B cell (primary cell): ENCODE measurements at regions of chr5 and their contacts with region 1.

Region 1: GRCh38 chr5:139293504-139294373 is at the start of gene MATR3:
- DNase-seq: peak; percentile 96
- ATAC-seq: peak; percentile 87
- H3K4me3 ChIP-seq: peak within 1 kb of the TSS; percentile 81 to 97 (median 87)
- H3K4me3 Mint-ChIP-seq: peak within 1 kb of the TSS; percentile 98
- H3K27ac ChIP-seq: peak within 1 kb of the TSS; percentile 94 to 99
- H3K27ac Mint-ChIP-seq: peak within 1 kb of the TSS; percentile 99
- H3K4me1 ChIP-seq: peaks cover 35 to 39% of the 10 kb centered on the region in 2 donors
- H3K4me1 Mint-ChIP-seq: peaks cover 44% of the 10 kb centered on the region
- H3K27me3 ChIP-seq: no peaks in the 10 kb centered on the region
- H3K27me3 Mint-ChIP-seq: no peaks in the 10 kb centered on the region
- CTCF ChIP-seq: no peak
- total RNA-seq, gene MATR3: 243 and 271 TPM in 2 replicates

Region 2: DNA sequence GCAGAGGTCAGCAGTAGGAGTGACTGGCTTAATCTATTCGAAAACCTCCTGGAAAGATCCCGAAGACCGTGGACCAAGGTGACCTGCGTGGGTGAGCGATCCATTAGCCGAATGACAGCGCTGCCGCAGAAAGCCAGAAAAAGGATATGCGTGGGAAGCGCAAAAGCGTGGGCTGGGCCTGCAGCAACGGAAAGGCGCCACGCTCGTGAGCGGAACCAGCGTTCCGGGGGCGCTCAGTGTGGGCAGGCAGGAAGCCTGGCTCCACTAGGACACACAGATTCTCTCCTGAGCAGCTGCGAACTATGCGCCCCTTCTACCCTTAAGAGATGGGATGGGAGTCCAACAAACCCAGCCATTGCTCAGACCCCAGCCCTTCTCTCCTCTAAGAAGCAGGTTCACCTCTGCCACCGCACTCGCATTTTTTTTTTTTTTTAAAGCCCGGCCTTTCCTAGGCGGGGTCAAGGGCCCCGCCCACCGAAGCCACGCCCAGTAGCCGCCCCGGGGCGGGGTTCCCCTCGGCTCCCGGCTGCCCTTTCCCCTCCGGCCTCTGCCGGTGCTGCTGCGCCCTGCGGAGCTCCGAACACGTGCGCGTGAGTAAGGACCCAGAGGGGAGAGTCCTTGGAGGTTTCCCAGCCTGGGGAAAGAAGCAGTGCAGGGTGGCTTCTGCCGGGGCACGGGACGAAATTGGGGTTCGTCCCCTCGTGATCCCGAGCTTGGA is 20.0 kb before region 1 on chr5:
- CTCF ChIA-PET with region 1: interaction called, 8 read pairs
- POLR2A ChIA-PET with region 1: interaction called, 34 read pairs
- intact Hi-C with region 1: loop called (anchors 1 kb)
- DNase-seq: peak; percentile 95
- ATAC-seq: peak; percentile 98
- H3K4me3 ChIP-seq: peak overlapping the region; percentile 61 to 86 (median 75)
- H3K4me3 Mint-ChIP-seq: peak overlapping the region; percentile 92
- H3K27ac ChIP-seq: peak overlapping the region; percentile 62 to 74
- H3K27ac Mint-ChIP-seq: peak overlapping the region; percentile 91
- H3K4me1 ChIP-seq: peaks cover 32 to 44% of the 10 kb centered on the region in 2 donors
- H3K4me1 Mint-ChIP-seq: peaks cover 46% of the 10 kb centered on the region
- H3K27me3 ChIP-seq: no peaks in the 10 kb centered on the region
- H3K27me3 Mint-ChIP-seq: no peaks in the 10 kb centered on the region
- CTCF ChIP-seq: no peak

Region 3: GRCh38 chr5:139312075-139312474 is 18.3 kb after region 1 on chr5:
- CTCF ChIA-PET with region 1: interaction called, 3 read pairs
- POLR2A ChIA-PET with region 1: interaction called, 4 read pairs
- intact Hi-C with region 1: loop called (anchors 2 kb)
- DNase-seq: no peak
- ATAC-seq: no peak
- H3K4me3 ChIP-seq: no peak overlapping the region
- H3K4me3 Mint-ChIP-seq: no peak overlapping the region
- H3K27ac ChIP-seq: no peak overlapping the region
- H3K27ac Mint-ChIP-seq: no peak overlapping the region
- H3K4me1 ChIP-seq: peaks cover 14 to 41% of the 10 kb centered on the region in 2 donors
- H3K4me1 Mint-ChIP-seq: peaks cover 53% of the 10 kb centered on the region
- H3K27me3 ChIP-seq: no peaks in the 10 kb centered on the region
- H3K27me3 Mint-ChIP-seq: no peaks in the 10 kb centered on the region
- CTCF ChIP-seq: no peak

Region 4: GRCh38 chr5:139392678-139393496 is 99.1 kb after region 1 on chr5:
- CTCF ChIA-PET with region 1: interaction called, 6 read pairs
- POLR2A ChIA-PET with region 1: interaction called, 20 read pairs
- intact Hi-C with region 1: loop called (anchors 1 kb)
- DNase-seq: peak; percentile 93
- ATAC-seq: peak; percentile 56
- H3K4me3 ChIP-seq: peak overlapping the region; percentile 69 to 90 (median 80)
- H3K4me3 Mint-ChIP-seq: peak overlapping the region; percentile 99
- H3K27ac ChIP-seq: peak overlapping the region; percentile 60 to 65
- H3K27ac Mint-ChIP-seq: peak overlapping the region; percentile 93
- H3K4me1 ChIP-seq: peaks cover 44 to 60% of the 10 kb centered on the region in 2 donors
- H3K4me1 Mint-ChIP-seq: peaks cover 46% of the 10 kb centered on the region
- H3K27me3 ChIP-seq: no peaks in the 10 kb centered on the region
- H3K27me3 Mint-ChIP-seq: no peaks in the 10 kb centered on the region
- CTCF ChIP-seq: peak; percentile 94

Region 5: GRCh38 chr5:139439013-139439903 is 145.5 kb after region 1 on chr5 and contains the start of gene DNAJC18:
- CTCF ChIA-PET with region 1: no interaction called
- POLR2A ChIA-PET with region 1: interaction called, 3 read pairs
- intact Hi-C with region 1: loop called (anchors 1 kb)
- DNase-seq: peak; percentile 93
- ATAC-seq: peak; percentile 94
- H3K4me3 ChIP-seq: peak within 1 kb of the TSS; percentile 53 to 97 (median 91)
- H3K4me3 Mint-ChIP-seq: peak within 1 kb of the TSS; percentile 97
- H3K27ac ChIP-seq: peak within 1 kb of the TSS; percentile 98 to 100
- H3K27ac Mint-ChIP-seq: peak within 1 kb of the TSS; percentile 99
- H3K4me1 ChIP-seq: peaks cover 11 to 12% of the 10 kb centered on the region in 2 donors
- H3K4me1 Mint-ChIP-seq: peaks cover 16% of the 10 kb centered on the region
- H3K27me3 ChIP-seq: no peaks in the 10 kb centered on the region
- H3K27me3 Mint-ChIP-seq: peaks cover 3% of the 10 kb centered on the region
- CTCF ChIP-seq: no peak
- total RNA-seq, gene DNAJC18: 13.6 and 16.5 TPM in 2 replicates

Region 6: DNA sequence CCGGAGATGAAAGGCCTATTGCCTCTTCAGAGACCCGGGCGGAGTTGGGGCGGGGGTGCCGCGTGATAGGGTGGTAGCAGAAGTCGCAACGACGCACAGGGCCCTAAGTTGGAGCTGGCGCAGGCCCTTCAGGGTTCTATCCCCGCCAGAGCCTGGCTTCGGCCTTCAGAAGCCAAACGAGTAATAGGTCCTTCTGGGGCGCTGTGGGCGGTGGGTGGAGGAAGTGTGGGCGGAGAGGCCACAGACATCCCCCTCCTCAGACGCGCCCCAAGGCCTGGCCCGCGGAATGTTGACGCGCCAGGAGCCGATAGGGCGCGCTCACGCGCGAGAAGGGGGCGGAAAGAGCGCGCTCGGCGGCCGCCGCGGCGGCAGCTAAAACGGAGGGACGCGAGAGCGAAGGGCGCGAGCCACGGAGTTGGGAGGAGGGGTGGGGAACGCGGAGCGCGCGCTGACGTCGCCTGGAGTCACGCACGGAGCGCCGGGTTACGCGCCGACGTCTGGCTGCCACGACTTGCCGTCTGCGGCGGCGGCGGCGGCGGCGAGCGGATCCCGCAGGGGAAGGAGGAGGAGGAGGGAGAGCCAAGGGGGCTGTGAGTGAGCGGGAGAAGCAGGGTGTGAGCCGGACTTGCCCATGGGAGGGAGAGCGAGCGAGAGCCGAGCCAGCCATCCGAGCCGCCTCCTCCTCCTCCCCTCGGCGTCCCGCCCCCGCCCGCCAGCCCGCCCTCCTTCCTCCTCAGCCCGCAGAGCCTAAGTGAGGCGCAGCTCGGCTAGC is 813.8 kb after region 1 on chr5:
- CTCF ChIA-PET with region 1: no interaction called
- POLR2A ChIA-PET with region 1: no interaction called
- intact Hi-C with region 1: loop called (anchors 5 kb)
- DNase-seq: peak; percentile 98
- ATAC-seq: peak; percentile 85
- H3K4me3 ChIP-seq: peak overlapping the region in 4 of 5 experiments; percentile 60 to 75 (median 68)
- H3K4me3 Mint-ChIP-seq: peak overlapping the region; percentile 96
- H3K27ac ChIP-seq: peak overlapping the region; percentile 97 to 99
- H3K27ac Mint-ChIP-seq: peak overlapping the region; percentile 99
- H3K4me1 ChIP-seq: peaks cover 35% of the 10 kb centered on the region in 2 donors
- H3K4me1 Mint-ChIP-seq: peaks cover 46% of the 10 kb centered on the region
- H3K27me3 ChIP-seq: peaks cover 5 to 23% (median 13%) of the 10 kb centered on the region in 4 experiments
- H3K27me3 Mint-ChIP-seq: peaks cover 20% of the 10 kb centered on the region
- CTCF ChIP-seq: peak; percentile 43